Thyroid gland (tissue), 4 donors: ENCODE measurements at regions of chr17 and their contacts with region 1.

Region 1: DNA sequence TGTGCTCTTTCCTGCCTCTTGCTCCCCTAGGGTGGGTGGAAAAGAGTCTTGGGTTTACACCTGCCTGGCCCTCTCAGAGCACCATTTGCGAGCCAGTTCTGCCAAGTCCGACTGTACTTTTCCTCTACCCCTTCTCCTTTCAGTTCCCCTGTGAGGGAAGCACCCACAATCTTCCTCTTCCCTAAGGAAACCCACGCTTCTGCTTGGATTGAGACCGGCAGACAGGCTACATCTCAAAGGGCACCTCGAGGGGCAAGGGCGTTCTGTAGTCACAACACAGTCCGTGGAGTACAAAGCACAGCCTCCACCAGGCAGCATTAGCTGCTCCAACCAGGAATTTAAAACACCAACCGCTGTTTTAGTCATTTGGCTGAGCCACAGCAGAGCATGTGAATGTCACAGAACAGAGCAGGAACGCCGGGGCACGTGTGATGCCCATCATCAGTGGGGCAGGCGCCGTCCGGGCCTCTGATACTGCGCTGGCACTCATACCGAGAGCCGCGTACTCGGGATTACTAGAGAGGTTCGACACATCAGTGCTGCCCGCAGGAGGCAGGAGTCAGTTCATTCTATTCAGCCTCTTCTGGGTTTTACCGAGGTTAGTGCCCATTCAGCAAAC is 13.7 kb upstream of the MNT start:
- DNase-seq: no peak
- H3K4me3 ChIP-seq: no peak overlapping the region
- H3K27ac ChIP-seq: no peak overlapping the region
- H3K4me1 ChIP-seq: peaks cover 0 to 12% of the 10 kb centered on the region in 2 donors
- H3K27me3 ChIP-seq: no peaks in the 10 kb centered on the region
- CTCF ChIP-seq: no peak
- POLR2A ChIP-seq: no peak

Region 2: DNA sequence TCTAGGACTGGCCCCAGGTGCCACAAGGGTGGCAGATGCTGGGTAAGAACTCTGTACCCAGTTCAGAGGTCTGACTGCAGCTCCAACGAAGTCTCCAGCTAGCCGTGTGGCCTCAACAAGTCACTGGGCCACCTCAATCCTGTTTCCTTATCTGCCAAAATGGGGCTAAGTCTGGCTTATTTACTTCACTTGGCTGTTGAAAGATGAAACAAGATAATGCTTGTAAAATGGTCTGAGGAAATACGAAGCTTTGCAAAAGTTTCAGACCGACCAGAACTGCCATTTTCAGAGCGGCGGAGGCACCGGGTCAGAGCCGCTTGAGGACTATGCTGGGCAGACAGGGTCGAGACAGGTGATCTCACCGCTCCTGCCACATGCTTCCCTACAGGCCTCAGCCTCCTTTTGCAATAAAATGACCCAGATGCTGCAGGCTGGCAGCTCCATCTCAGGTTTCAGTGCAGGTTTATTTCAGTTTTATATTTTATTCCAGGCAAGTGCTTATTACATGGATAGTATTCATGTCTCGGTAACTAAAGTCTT is 30.9 kb before region 1 on chr17:
- intact Hi-C with region 1: loop called (anchors 2 kb)
- DNase-seq: no peak
- H3K4me3 ChIP-seq: no peak overlapping the region
- H3K27ac ChIP-seq: peak overlapping the region in 1 of 3 donors; percentile 36
- H3K4me1 ChIP-seq: peaks cover 23 to 28% of the 10 kb centered on the region in 2 donors
- H3K27me3 ChIP-seq: no peaks in the 10 kb centered on the region
- CTCF ChIP-seq: no peak
- POLR2A ChIP-seq: no peak